ENCODE measurements at regions of chr1 and their contacts with region 1.

Region 1: GRCh38 chr1:84944767-84945486 is 51.9 kb upstream of the LPAR3 start:
- DNase-seq: peak in 1 of 2 experiments; percentile 61
- H3K4me3 ChIP-seq: no peak overlapping the region
- H3K27ac ChIP-seq: no peak overlapping the region
- H3K4me1 ChIP-seq: peaks cover 0 to 2% (median 0%) of the 10 kb centered on the region in 4 experiments; a peak in 3 of 7 replicates
- H3K27me3 ChIP-seq: peaks cover 0 to 2% (median 0%) of the 10 kb centered on the region in 4 experiments; a peak in 1 of 7 replicates
- CTCF ChIP-seq: peak; percentile 63 to 86 (median 71)
- EP300 ChIP-seq: no peak
- POLR2A ChIP-seq: no peak
- RAD21 ChIP-seq: peak; percentile 72 to 74

Region 2: GRCh38 chr1:84712276-84712874 is 232.6 kb before region 1 on chr1:
- CTCF ChIA-PET with region 1: no interaction called
- POLR2A ChIA-PET with region 1: no interaction called
- DNase-seq: no peak
- H3K4me3 ChIP-seq: no peak overlapping the region
- H3K27ac ChIP-seq: no peak overlapping the region
- H3K4me1 ChIP-seq: peaks cover 0 to 5% (median 2%) of the 10 kb centered on the region in 4 experiments; a peak in 3 of 7 replicates
- H3K27me3 ChIP-seq: no peaks in the 10 kb centered on the region
- CTCF ChIP-seq: no peak
- EP300 ChIP-seq: no peak
- POLR2A ChIP-seq: no peak
- RAD21 ChIP-seq: no peak

Region 3: GRCh38 chr1:84772428-84772943 is 172.4 kb before region 1 on chr1:
- CTCF ChIA-PET with region 1: interaction called, 12 read pairs
- POLR2A ChIA-PET with region 1: no interaction called
- DNase-seq: peak; percentile 63 to 94
- H3K4me3 ChIP-seq: no peak overlapping the region
- H3K27ac ChIP-seq: no peak overlapping the region
- H3K4me1 ChIP-seq: peaks cover 0 to 5% (median 3%) of the 10 kb centered on the region in 4 experiments; a peak in 5 of 7 replicates
- H3K27me3 ChIP-seq: no peaks in the 10 kb centered on the region
- CTCF ChIP-seq: peak; percentile 82 to 92 (median 87)
- EP300 ChIP-seq: no peak
- POLR2A ChIP-seq: no peak
- RAD21 ChIP-seq: peak; percentile 97 to 98

Region 4: DNA sequence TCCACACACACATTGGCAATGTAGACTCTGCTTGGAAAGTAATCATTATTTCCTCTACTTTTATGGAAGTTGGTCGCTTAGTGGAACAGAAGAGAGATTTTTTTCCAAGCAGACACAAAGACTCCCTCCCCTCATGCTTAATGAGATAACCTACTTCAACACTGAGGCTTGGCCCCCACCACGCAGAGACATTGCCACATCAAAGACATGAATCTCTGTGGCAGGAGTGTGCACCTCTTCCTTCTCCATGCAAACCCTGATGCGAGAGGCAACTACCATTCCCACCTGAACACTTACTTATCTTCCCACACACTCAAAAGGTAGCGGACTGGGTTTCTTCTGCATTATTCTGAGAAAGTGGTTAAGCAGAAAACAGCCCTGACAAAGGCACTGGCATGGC is 14.6 kb before region 1 on chr1:
- CTCF ChIA-PET with region 1: interaction called, 33 read pairs
- POLR2A ChIA-PET with region 1: no interaction called
- DNase-seq: no peak
- H3K4me3 ChIP-seq: no peak overlapping the region
- H3K27ac ChIP-seq: no peak overlapping the region
- H3K4me1 ChIP-seq: peaks cover 0 to 3% (median 0%) of the 10 kb centered on the region in 4 experiments; a peak in 1 of 7 replicates
- H3K27me3 ChIP-seq: no peaks in the 10 kb centered on the region
- CTCF ChIP-seq: no peak
- EP300 ChIP-seq: no peak
- POLR2A ChIP-seq: no peak
- RAD21 ChIP-seq: no peak

Region 5: DNA sequence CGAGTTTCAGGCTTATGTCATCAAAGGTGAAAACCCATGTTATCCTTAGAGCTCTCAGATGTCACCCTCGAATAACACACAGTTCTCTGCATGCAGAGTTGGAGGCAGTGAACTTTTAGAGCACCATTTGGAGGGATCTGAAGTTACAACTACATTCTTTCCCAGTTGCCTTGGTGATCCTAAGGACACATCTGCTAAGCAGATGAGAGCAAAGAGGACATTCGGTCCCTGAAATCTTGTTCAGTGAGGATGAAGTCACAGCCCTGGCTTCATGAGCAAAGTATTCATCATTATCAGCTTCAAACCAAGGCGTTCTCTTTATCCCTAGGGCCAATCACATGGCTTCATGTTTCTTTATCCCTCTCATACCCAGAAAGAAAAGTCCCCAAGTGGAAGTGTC is 75.1 kb after region 1 on chr1:
- CTCF ChIA-PET with region 1: interaction called, 122 read pairs
- POLR2A ChIA-PET with region 1: interaction called, 3 read pairs
- DNase-seq: no peak
- H3K4me3 ChIP-seq: no peak overlapping the region
- H3K27ac ChIP-seq: no peak overlapping the region
- H3K4me1 ChIP-seq: no peaks in the 10 kb centered on the region
- H3K27me3 ChIP-seq: no peaks in the 10 kb centered on the region
- CTCF ChIP-seq: no peak
- EP300 ChIP-seq: no peak
- POLR2A ChIP-seq: no peak
- RAD21 ChIP-seq: no peak

Region 6: DNA sequence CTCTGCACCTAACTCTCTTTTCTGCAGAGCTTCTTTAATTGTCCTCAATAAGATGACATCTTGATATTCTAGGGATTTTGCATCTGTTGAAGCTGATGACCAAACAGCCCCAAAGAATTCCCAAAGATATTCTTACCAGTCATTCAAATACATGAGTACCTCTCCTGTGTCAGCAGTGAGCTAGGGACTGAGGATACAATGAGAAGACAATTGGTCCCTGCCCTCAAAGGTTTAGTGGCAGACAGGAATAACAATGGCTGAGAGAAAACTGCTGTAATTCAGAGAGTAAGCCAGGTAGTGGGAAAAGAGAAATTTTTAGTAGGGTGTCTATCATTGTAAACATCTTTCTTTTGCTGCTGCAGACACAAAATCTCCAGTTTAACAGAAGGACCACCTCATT is 97.5 kb after region 1 on chr1:
- CTCF ChIA-PET with region 1: interaction called, 21 read pairs
- POLR2A ChIA-PET with region 1: no interaction called
- DNase-seq: no peak
- H3K4me3 ChIP-seq: no peak overlapping the region
- H3K27ac ChIP-seq: no peak overlapping the region
- H3K4me1 ChIP-seq: peaks cover 0 to 5% (median 2%) of the 10 kb centered on the region in 4 experiments; a peak in 3 of 7 replicates
- H3K27me3 ChIP-seq: peaks cover 8 to 27% (median 20%) of the 10 kb centered on the region in 4 experiments
- CTCF ChIP-seq: no peak
- EP300 ChIP-seq: no peak
- POLR2A ChIP-seq: no peak
- RAD21 ChIP-seq: no peak

Region 7: GRCh38 chr1:85109475-85109874 is 164.5 kb after region 1 on chr1:
- CTCF ChIA-PET with region 1: interaction called, 43 read pairs
- POLR2A ChIA-PET with region 1: no interaction called
- DNase-seq: peak in 1 of 2 experiments; percentile 50
- H3K4me3 ChIP-seq: no peak overlapping the region
- H3K27ac ChIP-seq: no peak overlapping the region
- H3K4me1 ChIP-seq: no peaks in the 10 kb centered on the region
- H3K27me3 ChIP-seq: no peaks in the 10 kb centered on the region
- CTCF ChIP-seq: peak; percentile 82 to 94 (median 93)
- EP300 ChIP-seq: no peak
- POLR2A ChIP-seq: no peak
- RAD21 ChIP-seq: peak; percentile 97 to 98

Region 8: GRCh38 chr1:85259118-85259911 is 314.4 kb after region 1 on chr1 and contains the start of gene C1orf52:
- CTCF ChIA-PET with region 1: interaction called, 29 read pairs
- POLR2A ChIA-PET with region 1: no interaction called
- DNase-seq: peak; percentile 88 to 100
- H3K4me3 ChIP-seq: peak within 1 kb of the TSS; percentile 79 to 94 (median 85)
- H3K27ac ChIP-seq: peak within 1 kb of the TSS; percentile 69; the same call in 1 of the 2 replicates
- H3K4me1 ChIP-seq: peaks cover 0 to 4% (median 2%) of the 10 kb centered on the region in 4 experiments; a peak in 3 of 7 replicates
- H3K27me3 ChIP-seq: no peaks in the 10 kb centered on the region
- CTCF ChIP-seq: peak; percentile 88 to 94 (median 89)
- EP300 ChIP-seq: peak in 1 of 2 experiments; percentile 62; a peak in 1 of 3 replicates
- POLR2A ChIP-seq: peak; percentile 50 to 91
- RAD21 ChIP-seq: peak; percentile 56 to 71
- total RNA-seq, gene C1orf52: 39.1 and 39.3 TPM in 2 replicates